ENCODE measurements at regions of chr1 and their contacts with region 1.

Region 1: DNA sequence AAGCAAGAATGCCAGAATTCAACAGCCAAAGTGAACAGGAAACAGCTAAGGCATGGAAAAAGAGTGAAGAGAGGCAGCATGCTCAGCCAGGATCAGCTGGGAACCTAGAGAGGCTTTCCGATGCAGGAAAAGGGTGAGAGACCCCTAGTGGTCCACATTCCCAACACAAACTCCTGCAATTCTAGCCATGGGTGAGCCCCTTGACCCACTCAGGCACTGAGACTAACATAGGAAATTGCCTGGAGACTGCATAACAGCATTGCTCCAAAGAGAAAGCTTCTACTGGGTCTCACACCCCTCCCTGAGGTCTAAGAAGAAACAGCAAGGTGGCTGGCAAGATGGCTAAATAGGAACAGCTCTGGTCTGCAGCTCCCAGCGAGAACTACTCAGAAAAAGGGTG is 123.2 kb downstream of the LHX8 start:
- DNase-seq: peak in 1 of 4 experiments; percentile 9
- ATAC-seq: peak; percentile 57
- H3K4me3 ChIP-seq: no peak overlapping the region
- H3K27ac ChIP-seq: no peak overlapping the region
- H3K4me1 ChIP-seq: no peaks in the 10 kb centered on the region
- H3K27me3 ChIP-seq: no peaks in the 10 kb centered on the region
- CTCF ChIP-seq: 0 out of 6 replicates have a peak, but pooled peaks of 1 of the 3 experiments have one; percentile 20
- EP300 ChIP-seq: no peak
- POLR2A ChIP-seq: no peak
- RAD21 ChIP-seq: no peak

Region 2: GRCh38 chr1:75625795-75626194 is 368.4 kb after region 1 on chr1:
- CTCF ChIA-PET with region 1: no interaction called
- POLR2A ChIA-PET with region 1: no interaction called
- in situ Hi-C with region 1: loop called (anchors 10 kb)
- intact Hi-C with region 1: no loop called
- DNase-seq: no peak
- ATAC-seq: no peak
- H3K4me3 ChIP-seq: no peak overlapping the region
- H3K27ac ChIP-seq: no peak overlapping the region
- H3K4me1 ChIP-seq: no peaks in the 10 kb centered on the region
- H3K27me3 ChIP-seq: no peaks in the 10 kb centered on the region
- CTCF ChIP-seq: no peak
- EP300 ChIP-seq: no peak
- POLR2A ChIP-seq: no peak
- RAD21 ChIP-seq: no peak